ENCODE measurements at regions of chr5 and their contacts with region 1.

Region 1: DNA sequence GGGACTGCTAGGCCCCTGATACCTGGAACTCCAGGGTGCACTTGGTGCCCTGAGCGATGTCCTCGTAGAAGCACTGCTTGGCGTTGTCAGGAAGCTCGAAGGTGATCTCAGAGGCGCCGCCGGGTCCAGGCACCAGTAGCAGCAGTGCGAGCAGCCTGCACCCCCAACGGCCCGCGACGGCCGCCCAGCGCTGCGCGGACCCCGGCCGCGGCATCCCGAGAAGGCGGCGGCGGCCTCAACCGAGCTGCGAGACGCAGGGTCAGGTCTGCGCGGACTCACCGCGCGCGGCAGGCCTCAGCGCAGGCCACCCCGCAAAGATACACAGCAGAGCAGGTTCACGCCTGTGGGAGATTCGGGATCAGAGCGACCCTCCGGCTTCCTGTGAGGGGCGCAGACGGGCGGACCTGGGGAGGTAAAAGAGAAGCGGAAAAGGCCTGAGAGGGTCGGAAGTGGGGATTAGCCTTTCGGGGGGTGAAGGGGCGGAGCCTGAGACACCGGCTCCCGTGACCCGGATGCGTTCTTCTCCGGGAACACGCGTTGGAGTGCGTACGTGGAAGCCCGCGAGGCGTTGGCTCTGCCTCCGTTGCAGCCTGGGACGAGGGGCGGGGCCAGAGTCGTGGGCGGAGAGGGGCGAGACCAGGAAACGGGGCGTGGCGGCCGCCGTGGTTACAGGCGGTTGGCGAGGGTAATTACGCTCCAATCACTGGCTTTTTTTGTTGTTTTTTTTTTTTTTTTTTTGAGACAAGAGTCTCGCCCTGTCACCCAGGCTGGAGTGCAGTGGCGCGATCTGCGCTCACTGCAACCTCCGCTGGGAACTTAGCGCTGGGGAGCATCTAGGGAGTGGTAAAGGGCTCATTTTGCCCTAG is at the start of gene TMED7:
- DNase-seq: peak; percentile 100
- H3K4me3 ChIP-seq: peak within 1 kb of the TSS; percentile 76 to 97 (median 90)
- H3K27ac ChIP-seq: peak within 1 kb of the TSS; percentile 91 to 97 (median 95)
- H3K4me1 ChIP-seq: peaks cover 0 to 46% (median 36%) of the 10 kb centered on the region in 4 donors
- H3K27me3 ChIP-seq: no peaks in the 10 kb centered on the region
- CTCF ChIP-seq: no peak
- EP300 ChIP-seq: peak in 1 of 4 donors; percentile 50
- POLR2A ChIP-seq: peak; percentile 65 to 79
- total RNA-seq, gene TMED7: 80.8 to 104 (median 88.2) TPM

Region 2: GRCh38 chr5:116084871-116085715 is 459.3 kb after region 1 on chr5 and contains the start of gene COMMD10:
- intact Hi-C with region 1: loop called (anchors 5 kb)
- DNase-seq: peak; percentile 87
- H3K4me3 ChIP-seq: peak within 1 kb of the TSS; percentile 93 to 98 (median 96)
- H3K27ac ChIP-seq: peak within 1 kb of the TSS; percentile 92 to 96 (median 92)
- H3K4me1 ChIP-seq: peaks cover 0 to 20% (median 13%) of the 10 kb centered on the region in 4 donors
- H3K27me3 ChIP-seq: no peaks in the 10 kb centered on the region
- CTCF ChIP-seq: no peak
- EP300 ChIP-seq: peak in 1 of 4 donors; percentile 2
- POLR2A ChIP-seq: peak; percentile 31 to 35
- total RNA-seq, gene COMMD10: 27.3 to 47.7 (median 41.3) TPM